ENCODE measurements at regions of chr1 and their contacts with region 1.

Region 1: DNA sequence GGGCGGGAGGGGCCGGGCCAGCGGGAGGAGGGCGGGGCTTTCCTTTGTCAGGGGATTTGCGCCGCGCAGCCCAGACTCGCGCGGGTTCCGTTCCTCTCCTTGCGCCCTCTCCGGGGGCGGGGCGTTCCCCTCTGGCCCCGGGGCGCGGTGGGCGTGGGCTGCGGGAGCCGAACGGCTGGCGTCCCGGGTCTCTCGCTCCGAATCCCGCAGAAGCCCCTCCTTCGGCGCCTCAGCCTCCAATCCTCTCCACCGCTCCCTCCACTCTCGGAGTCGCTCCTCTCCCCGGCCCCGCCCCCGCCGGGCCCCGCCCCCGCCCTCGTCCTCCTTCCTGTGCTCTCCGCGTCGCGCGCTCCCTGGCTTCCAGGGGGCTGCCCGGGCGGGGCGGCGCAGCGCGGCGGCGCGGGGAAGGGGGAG is 82.8 kb upstream of the BMP8A start:
- DNase-seq: peak; percentile 73 to 90 (median 77)
- H3K4me3 ChIP-seq: peak overlapping the region in 1 of 2 donors; percentile 59
- H3K4me3 Mint-ChIP-seq: peak overlapping the region in 7 of 8 donors; percentile 54 to 93 (median 92)
- H3K27ac ChIP-seq: peak overlapping the region; percentile 58
- H3K27ac Mint-ChIP-seq: peak overlapping the region in 1 of 7 donors; percentile 66
- H3K4me1 ChIP-seq: peaks cover 63% of the 10 kb centered on the region
- H3K4me1 Mint-ChIP-seq: peaks cover 46 to 72% (median 60%) of the 10 kb centered on the region in 4 donors
- H3K27me3 ChIP-seq: no peaks in the 10 kb centered on the region
- H3K27me3 Mint-ChIP-seq: no peaks in the 10 kb centered on the region

Region 2: GRCh38 chr1:38815903-38816627 is 592.6 kb before region 1 on chr1:
- CTCF ChIA-PET with region 1: no interaction called
- POLR2A ChIA-PET with region 1: no interaction called
- intact Hi-C with region 1: no loop called
- DNase-seq: no peak
- H3K4me3 ChIP-seq: no peak overlapping the region
- H3K4me3 Mint-ChIP-seq: peak overlapping the region in 5 of 8 donors; percentile 20 to 59 (median 33)
- H3K27ac ChIP-seq: no peak overlapping the region
- H3K27ac Mint-ChIP-seq: no peak overlapping the region
- H3K4me1 ChIP-seq: peaks cover 19% of the 10 kb centered on the region
- H3K4me1 Mint-ChIP-seq: peaks cover 3 to 23% (median 6%) of the 10 kb centered on the region in 4 donors
- H3K27me3 ChIP-seq: peaks cover 41% of the 10 kb centered on the region
- H3K27me3 Mint-ChIP-seq: peaks cover 56 to 69% of the 10 kb centered on the region in 2 donors

Region 3: GRCh38 chr1:39183503-39184353 is 224.9 kb before region 1 on chr1:
- CTCF ChIA-PET with region 1: interaction called, 6 read pairs
- POLR2A ChIA-PET with region 1: no interaction called
- intact Hi-C with region 1: loop called (anchors 5 kb)
- DNase-seq: peak; percentile 83 to 95 (median 87)
- H3K4me3 ChIP-seq: no peak overlapping the region
- H3K4me3 Mint-ChIP-seq: peak overlapping the region in 5 of 8 donors; percentile 8 to 53 (median 35)
- H3K27ac ChIP-seq: peak overlapping the region; percentile 70
- H3K27ac Mint-ChIP-seq: peak overlapping the region; percentile 90 to 98 (median 96)
- H3K4me1 ChIP-seq: peaks cover 34% of the 10 kb centered on the region
- H3K4me1 Mint-ChIP-seq: peaks cover 18 to 44% (median 30%) of the 10 kb centered on the region in 4 donors
- H3K27me3 ChIP-seq: no peaks in the 10 kb centered on the region
- H3K27me3 Mint-ChIP-seq: no peaks in the 10 kb centered on the region

Region 4: GRCh38 chr1:39360731-39361130 is 47.9 kb before region 1 on chr1:
- CTCF ChIA-PET with region 1: interaction called, 7 read pairs
- POLR2A ChIA-PET with region 1: no interaction called
- intact Hi-C with region 1: loop called (anchors 10 kb)
- DNase-seq: no peak
- H3K4me3 ChIP-seq: no peak overlapping the region
- H3K4me3 Mint-ChIP-seq: no peak overlapping the region
- H3K27ac ChIP-seq: no peak overlapping the region
- H3K27ac Mint-ChIP-seq: peak overlapping the region in 4 of 7 donors; percentile 16 to 55 (median 47)
- H3K4me1 ChIP-seq: no peaks in the 10 kb centered on the region
- H3K4me1 Mint-ChIP-seq: peaks cover 0 to 3% (median 0%) of the 10 kb centered on the region in 4 donors
- H3K27me3 ChIP-seq: no peaks in the 10 kb centered on the region
- H3K27me3 Mint-ChIP-seq: no peaks in the 10 kb centered on the region

Region 5: GRCh38 chr1:39378377-39378776 is 30.3 kb before region 1 on chr1:
- CTCF ChIA-PET with region 1: interaction called, 25 read pairs
- POLR2A ChIA-PET with region 1: interaction called, 3 read pairs
- intact Hi-C with region 1: no loop called
- DNase-seq: peak in 1 of 5 donors; percentile 6
- H3K4me3 ChIP-seq: no peak overlapping the region
- H3K4me3 Mint-ChIP-seq: no peak overlapping the region
- H3K27ac ChIP-seq: no peak overlapping the region
- H3K27ac Mint-ChIP-seq: peak overlapping the region in 5 of 7 donors; percentile 2 to 91 (median 76)
- H3K4me1 ChIP-seq: no peaks in the 10 kb centered on the region
- H3K4me1 Mint-ChIP-seq: peaks cover 0 to 4% (median 3%) of the 10 kb centered on the region in 4 donors
- H3K27me3 ChIP-seq: no peaks in the 10 kb centered on the region
- H3K27me3 Mint-ChIP-seq: no peaks in the 10 kb centered on the region

Region 6: GRCh38 chr1:39391691-39392679 is 16.7 kb before region 1 on chr1:
- CTCF ChIA-PET with region 1: interaction called, 61 read pairs
- POLR2A ChIA-PET with region 1: interaction called, 9 read pairs
- intact Hi-C with region 1: no loop called
- DNase-seq: no peak
- H3K4me3 ChIP-seq: no peak overlapping the region
- H3K4me3 Mint-ChIP-seq: peak overlapping the region in 5 of 8 donors; percentile 3 to 41 (median 13)
- H3K27ac ChIP-seq: no peak overlapping the region
- H3K27ac Mint-ChIP-seq: peak overlapping the region; percentile 1 to 83 (median 65)
- H3K4me1 ChIP-seq: peaks cover 64% of the 10 kb centered on the region
- H3K4me1 Mint-ChIP-seq: peaks cover 55 to 79% (median 69%) of the 10 kb centered on the region in 4 donors
- H3K27me3 ChIP-seq: no peaks in the 10 kb centered on the region
- H3K27me3 Mint-ChIP-seq: no peaks in the 10 kb centered on the region

Region 7: DNA sequence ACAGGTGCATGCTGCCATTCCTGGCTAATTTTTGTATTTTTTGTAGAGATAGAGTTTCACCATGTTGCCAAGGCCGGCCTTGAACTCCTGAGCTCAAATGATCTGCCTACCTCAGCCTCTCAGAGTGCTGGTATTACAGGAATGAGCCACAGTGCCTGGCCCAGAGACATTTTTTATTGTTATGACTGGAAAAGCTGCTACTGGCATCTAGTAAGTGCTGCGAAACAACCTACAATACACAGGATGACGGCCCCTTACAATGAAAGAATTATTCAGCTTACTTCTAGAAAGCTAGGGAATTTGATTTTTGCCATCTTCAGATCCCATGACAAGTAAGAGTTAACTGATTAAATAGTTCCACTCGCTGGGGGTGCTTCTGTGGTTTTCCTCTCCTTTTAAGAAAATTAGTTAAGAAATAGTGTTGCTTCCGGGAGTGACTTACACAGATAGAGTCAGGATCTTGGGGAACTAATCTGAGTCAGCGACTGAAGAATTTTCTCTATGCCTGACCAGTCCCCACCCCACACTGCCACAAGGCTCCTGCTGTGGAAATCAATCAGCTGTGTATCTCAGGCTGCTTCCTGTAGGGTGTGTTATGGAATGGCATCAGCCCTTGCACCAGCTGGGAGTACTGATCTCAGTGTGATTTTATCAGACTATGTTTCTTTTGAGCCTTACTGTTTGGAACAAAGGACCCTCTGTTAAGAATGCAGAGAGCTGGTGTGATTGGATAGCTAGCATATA is 10.2 kb before region 1 on chr1:
- CTCF ChIA-PET with region 1: interaction called, 61 read pairs
- POLR2A ChIA-PET with region 1: interaction called, 12 read pairs
- intact Hi-C with region 1: loop called (anchors 1 kb)
- DNase-seq: peak in 2 of 5 donors; percentile 9 to 63
- H3K4me3 ChIP-seq: no peak overlapping the region
- H3K4me3 Mint-ChIP-seq: peak overlapping the region in 7 of 8 donors; percentile 20 to 79 (median 64)
- H3K27ac ChIP-seq: no peak overlapping the region
- H3K27ac Mint-ChIP-seq: peak overlapping the region; percentile 24 to 82 (median 44)
- H3K4me1 ChIP-seq: peaks cover 67% of the 10 kb centered on the region
- H3K4me1 Mint-ChIP-seq: peaks cover 55 to 74% (median 67%) of the 10 kb centered on the region in 4 donors
- H3K27me3 ChIP-seq: no peaks in the 10 kb centered on the region
- H3K27me3 Mint-ChIP-seq: no peaks in the 10 kb centered on the region

Region 8: GRCh38 chr1:39420493-39420892 is 11.8 kb after region 1 on chr1:
- CTCF ChIA-PET with region 1: interaction called, 20 read pairs
- POLR2A ChIA-PET with region 1: interaction called, 3 read pairs
- intact Hi-C with region 1: no loop called
- DNase-seq: no peak
- H3K4me3 ChIP-seq: no peak overlapping the region
- H3K4me3 Mint-ChIP-seq: no peak overlapping the region
- H3K27ac ChIP-seq: no peak overlapping the region
- H3K27ac Mint-ChIP-seq: peak overlapping the region in 5 of 7 donors; percentile 17 to 57 (median 24)
- H3K4me1 ChIP-seq: peaks cover 3% of the 10 kb centered on the region
- H3K4me1 Mint-ChIP-seq: peaks cover 14 to 34% (median 20%) of the 10 kb centered on the region in 4 donors
- H3K27me3 ChIP-seq: no peaks in the 10 kb centered on the region
- H3K27me3 Mint-ChIP-seq: no peaks in the 10 kb centered on the region

Measured in CD4-positive, alpha-beta memory T cell (primary cell).